Heart right ventricle (tissue), 16 donors: ENCODE measurements at regions of chr17 and their contacts with region 1.

Region 1: DNA sequence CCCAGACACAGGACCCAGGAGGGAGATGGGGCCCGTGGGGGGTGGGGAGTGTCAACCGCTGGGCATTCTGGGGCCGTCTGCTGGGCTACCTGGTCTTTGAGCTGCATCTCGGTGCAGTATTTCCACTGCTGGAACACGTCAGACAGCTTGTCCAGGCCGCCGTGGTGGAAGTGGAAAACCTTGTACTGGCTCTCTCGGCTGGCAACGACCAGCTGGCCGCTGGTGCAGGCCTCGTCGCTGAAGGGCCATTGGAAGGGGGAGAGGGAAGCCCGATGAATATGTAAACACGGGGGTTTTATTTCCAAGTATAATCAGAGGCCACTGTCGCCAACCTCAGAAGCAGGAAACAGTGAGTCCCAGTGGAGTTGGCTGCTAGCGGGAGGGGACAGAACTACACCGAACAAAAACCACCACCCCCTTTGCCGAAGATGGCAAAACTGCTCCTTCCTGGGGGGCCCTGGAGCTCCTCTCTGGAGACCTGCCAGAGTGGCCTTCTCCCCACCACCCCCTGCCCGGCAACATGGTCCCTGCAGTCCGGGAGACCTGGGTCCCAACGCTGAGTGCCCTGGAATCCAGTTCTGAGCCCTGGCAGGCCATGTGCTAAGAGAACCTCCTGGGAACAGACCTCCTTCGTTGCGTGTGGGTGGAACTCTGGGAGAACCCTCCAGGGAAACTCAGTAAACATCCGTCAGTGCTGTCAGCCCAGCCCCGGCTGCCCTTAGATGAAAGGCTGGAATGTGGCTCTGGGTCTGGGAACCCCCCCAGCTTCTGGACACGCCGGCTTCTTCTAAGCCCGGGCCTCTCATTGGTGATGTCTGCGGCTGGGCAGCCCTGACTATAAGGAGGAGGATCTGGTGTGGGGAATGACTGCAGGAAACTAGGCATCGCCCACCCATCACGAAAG is 84.1 kb downstream of the TBC1D16 start:
- DNase-seq: peak; percentile 51 to 55
- ATAC-seq: peak; percentile 62 to 88 (median 77)
- H3K4me3 ChIP-seq: peak overlapping the region in 6 of 10 donors; percentile 16 to 41 (median 24)
- H3K27ac ChIP-seq: peak overlapping the region in 6 of 10 donors; percentile 5 to 69 (median 40)
- H3K4me1 ChIP-seq: peaks cover 3 to 25% (median 18%) of the 10 kb centered on the region in 9 donors
- H3K27me3 ChIP-seq: no peaks in the 10 kb centered on the region
- CTCF ChIP-seq: no peak

Region 2: DNA sequence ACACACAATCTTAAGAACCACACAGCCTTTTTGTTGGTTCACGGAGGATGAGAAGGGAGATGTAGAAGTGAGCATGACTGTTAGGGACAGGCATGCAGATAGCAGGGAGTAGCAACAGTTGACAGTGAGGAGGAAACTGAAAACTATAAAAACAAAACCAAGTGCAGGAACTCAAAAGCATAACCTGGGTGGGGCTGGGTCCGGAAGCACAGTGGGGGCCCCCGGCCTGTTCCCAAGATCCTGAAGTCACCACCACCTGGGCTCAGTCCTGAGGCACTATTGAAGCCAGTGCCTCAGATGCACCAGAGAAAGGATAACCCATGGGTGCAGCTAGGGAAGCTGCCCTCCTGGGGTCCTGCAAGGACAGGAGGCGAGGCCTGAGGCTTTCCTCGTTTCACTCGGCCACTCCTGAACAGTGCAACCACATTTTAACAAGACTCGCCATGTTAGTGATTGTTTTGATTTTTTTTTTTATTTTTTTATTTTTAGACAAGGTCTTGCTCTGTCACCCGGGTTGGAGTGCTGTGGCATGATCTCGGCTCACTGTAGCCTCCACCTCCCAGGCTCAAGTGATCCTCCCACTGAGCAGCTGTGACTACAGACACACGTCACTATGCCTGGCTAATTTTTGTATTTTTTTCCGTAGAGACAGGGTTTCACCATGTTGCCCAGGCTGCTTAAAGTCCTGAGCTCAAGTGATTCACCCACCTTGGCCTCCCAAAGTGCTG is 84.7 kb before region 1 on chr17:
- intact Hi-C with region 1: loop called in 1 of 10 experiments (anchors 10 kb)
- DNase-seq: no peak
- ATAC-seq: no peak
- H3K4me3 ChIP-seq: no peak overlapping the region
- H3K27ac ChIP-seq: no peak overlapping the region
- H3K4me1 ChIP-seq: peaks cover 0 to 5% (median 0%) of the 10 kb centered on the region in 9 donors
- H3K27me3 ChIP-seq: peaks cover 0 to 76% (median 47%) of the 10 kb centered on the region in 7 donors
- CTCF ChIP-seq: no peak